ENCODE measurements at regions of chr16 and their contacts with region 1.

Region 1: DNA sequence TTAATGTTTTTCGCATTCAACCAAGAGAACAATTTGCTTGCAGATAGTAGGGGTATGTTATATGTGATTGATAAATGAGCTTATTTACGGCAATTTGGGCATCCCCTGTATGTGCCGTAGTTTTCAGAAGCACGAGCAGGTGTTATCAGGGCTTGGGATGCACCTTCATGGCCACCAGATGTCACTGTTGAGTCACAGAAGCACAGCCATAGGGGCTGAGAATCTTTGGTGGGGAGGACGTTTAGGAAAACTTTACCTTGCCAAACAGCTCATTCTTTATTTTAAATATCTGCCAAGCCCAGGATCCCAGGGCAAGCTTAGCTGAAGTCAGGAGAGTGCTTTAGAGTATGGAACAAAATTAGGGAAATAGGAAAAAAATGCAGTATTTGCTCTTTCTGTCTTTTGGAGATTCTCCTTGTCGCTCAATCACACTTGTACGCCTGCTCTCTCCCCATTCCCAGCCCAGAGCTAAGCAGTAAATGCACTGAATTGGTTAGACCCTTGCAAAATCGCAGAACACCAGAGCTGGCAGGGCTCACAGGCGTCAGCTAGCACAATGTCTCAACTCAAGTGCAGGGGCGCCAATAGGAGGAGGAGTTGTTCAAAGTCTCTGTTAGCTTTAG is 93.6 kb upstream of the MPHOSPH6 start:
- DNase-seq: peak; percentile 75
- H3K4me3 ChIP-seq: no peak overlapping the region
- H3K27ac ChIP-seq: no peak overlapping the region
- H3K4me1 ChIP-seq: no peaks in the 10 kb centered on the region
- H3K27me3 ChIP-seq: no peaks in the 10 kb centered on the region
- CTCF ChIP-seq: peak; percentile 96

Region 2: GRCh38 chr16:82344157-82344556 is 80.5 kb after region 1 on chr16:
- CTCF ChIA-PET with region 1: interaction called, 6 read pairs
- POLR2A ChIA-PET with region 1: no interaction called
- intact Hi-C with region 1: loop called (anchors 5 kb)
- DNase-seq: peak; percentile 6
- H3K4me3 ChIP-seq: no peak overlapping the region
- H3K27ac ChIP-seq: no peak overlapping the region
- H3K4me1 ChIP-seq: no peaks in the 10 kb centered on the region
- H3K27me3 ChIP-seq: no peaks in the 10 kb centered on the region
- CTCF ChIP-seq: peak; percentile 54

Region 3: GRCh38 chr16:82456683-82457082 is 193.1 kb after region 1 on chr16:
- CTCF ChIA-PET with region 1: interaction called, 18 read pairs
- POLR2A ChIA-PET with region 1: no interaction called
- intact Hi-C with region 1: loop called (anchors 1 kb)
- DNase-seq: peak; percentile 70
- H3K4me3 ChIP-seq: no peak overlapping the region
- H3K27ac ChIP-seq: no peak overlapping the region
- H3K4me1 ChIP-seq: no peaks in the 10 kb centered on the region
- H3K27me3 ChIP-seq: no peaks in the 10 kb centered on the region
- CTCF ChIP-seq: peak; percentile 84

Region 4: GRCh38 chr16:82639666-82640336 is 376.2 kb after region 1 on chr16:
- CTCF ChIA-PET with region 1: interaction called, 3 read pairs
- POLR2A ChIA-PET with region 1: no interaction called
- intact Hi-C with region 1: loop called (anchors 2 kb)
- DNase-seq: peak; percentile 66
- H3K4me3 ChIP-seq: no peak overlapping the region
- H3K27ac ChIP-seq: no peak overlapping the region
- H3K4me1 ChIP-seq: peaks cover 11% of the 10 kb centered on the region
- H3K27me3 ChIP-seq: no peaks in the 10 kb centered on the region
- CTCF ChIP-seq: peak; percentile 93

Region 5: DNA sequence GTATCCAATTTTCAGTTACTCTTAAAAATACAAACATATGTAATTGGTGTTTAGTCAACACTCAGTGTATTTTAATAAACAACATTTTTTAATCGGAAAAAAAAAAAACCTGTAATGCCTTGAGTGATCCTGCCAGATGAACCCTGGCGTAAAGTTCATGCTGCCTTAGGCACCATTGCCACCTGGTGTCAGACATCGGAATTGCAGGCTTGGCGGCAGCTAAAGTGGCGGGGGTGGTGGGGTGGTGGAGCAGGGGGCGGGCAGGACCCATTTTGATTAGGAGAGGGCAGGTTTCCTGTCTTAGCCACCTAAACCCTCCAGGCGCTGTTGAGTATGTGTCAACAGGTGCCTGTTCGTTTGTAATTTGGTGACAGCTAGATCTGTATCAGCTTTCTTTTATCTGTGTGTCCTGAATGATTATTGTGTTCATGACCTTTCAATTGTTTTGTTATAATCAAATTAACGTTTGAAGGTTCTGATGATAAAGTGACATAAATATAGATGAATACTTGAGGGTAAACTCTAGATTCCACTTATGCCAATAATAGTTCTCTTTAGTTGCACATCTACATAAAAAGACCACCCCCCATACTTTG is 951.9 kb after region 1 on chr16:
- CTCF ChIA-PET with region 1: no interaction called
- POLR2A ChIA-PET with region 1: no interaction called
- intact Hi-C with region 1: loop called (anchors 10 kb)
- DNase-seq: peak; percentile 49
- H3K4me3 ChIP-seq: no peak overlapping the region
- H3K27ac ChIP-seq: no peak overlapping the region
- H3K4me1 ChIP-seq: no peaks in the 10 kb centered on the region
- H3K27me3 ChIP-seq: no peaks in the 10 kb centered on the region
- CTCF ChIP-seq: peak; percentile 78

Region 6: GRCh38 chr16:83449861-83450260 is 1186.2 kb after region 1 on chr16:
- CTCF ChIA-PET with region 1: no interaction called
- POLR2A ChIA-PET with region 1: no interaction called
- intact Hi-C with region 1: loop called (anchors 5 kb)
- DNase-seq: no peak
- H3K4me3 ChIP-seq: no peak overlapping the region
- H3K27ac ChIP-seq: no peak overlapping the region
- H3K4me1 ChIP-seq: no peaks in the 10 kb centered on the region
- H3K27me3 ChIP-seq: peaks cover 8% of the 10 kb centered on the region
- CTCF ChIP-seq: no peak

Measured in A673 (cell line).